ENCODE measurements at regions of chr2 and their contacts with region 1.

Region 1: GRCh38 chr2:144619760-144620159 is 99.8 kb upstream of the ZEB2 start:
- DNase-seq: no peak
- ATAC-seq: no peak
- H3K4me3 ChIP-seq: no peak overlapping the region
- H3K27ac ChIP-seq: no peak overlapping the region
- H3K4me1 ChIP-seq: no peaks in the 10 kb centered on the region
- H3K27me3 ChIP-seq: no peaks in the 10 kb centered on the region
- CTCF ChIP-seq: no peak
- POLR2A ChIP-seq: no peak

Region 2: DNA sequence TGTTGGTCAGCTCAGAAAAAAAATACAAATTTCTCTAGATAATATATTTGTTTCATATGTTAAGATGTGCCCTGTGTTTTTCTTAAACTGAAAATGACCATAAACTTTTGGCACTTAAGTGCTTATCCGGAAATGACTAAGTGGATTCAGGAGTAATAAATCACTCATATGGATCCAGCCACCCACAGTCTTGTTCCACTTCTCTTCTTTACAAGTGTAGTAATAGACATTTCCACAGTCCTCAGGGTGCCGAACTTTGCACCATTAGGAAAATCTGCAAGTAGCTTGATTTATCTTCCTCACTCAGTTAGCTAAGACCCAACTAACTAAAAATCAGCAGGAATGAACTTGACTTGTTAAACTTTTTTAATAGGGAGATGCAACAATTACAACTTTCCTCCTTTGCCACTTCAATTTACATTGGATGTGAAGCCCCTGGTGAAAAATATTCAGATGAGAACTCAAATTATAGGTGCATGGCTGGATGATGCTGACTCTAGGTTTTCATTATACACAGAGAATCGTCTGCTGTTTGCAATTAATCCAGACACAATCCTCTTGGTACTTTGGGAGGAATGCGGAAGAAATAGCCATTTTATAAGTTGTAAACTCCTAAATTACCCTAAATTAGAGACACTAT is 1168.0 kb before region 1 on chr2:
- in situ Hi-C with region 1: no loop called
- intact Hi-C with region 1: loop called (anchors 5 kb)
- DNase-seq: no peak
- ATAC-seq: no peak
- H3K4me3 ChIP-seq: no peak overlapping the region
- H3K27ac ChIP-seq: peak overlapping the region in 1 of 4 donors; percentile 3
- H3K4me1 ChIP-seq: no peaks in the 10 kb centered on the region
- H3K27me3 ChIP-seq: no peaks in the 10 kb centered on the region
- CTCF ChIP-seq: no peak
- POLR2A ChIP-seq: no peak